ENCODE measurements at regions of chr2 and their contacts with region 1.

Region 1: GRCh38 chr2:36355151-36355889 is at the start of gene CRIM1:
- DNase-seq: peak; percentile 84
- H3K4me3 Mint-ChIP-seq: peak within 1 kb of the TSS; percentile 99
- H3K27ac Mint-ChIP-seq: peak within 1 kb of the TSS; percentile 76
- H3K4me1 Mint-ChIP-seq: peaks cover 43% of the 10 kb centered on the region
- H3K27me3 Mint-ChIP-seq: no peaks in the 10 kb centered on the region
- CTCF ChIP-seq: no peak
- total RNA-seq, gene CRIM1: 48.0 and 57.6 TPM in 2 replicates

Region 2: DNA sequence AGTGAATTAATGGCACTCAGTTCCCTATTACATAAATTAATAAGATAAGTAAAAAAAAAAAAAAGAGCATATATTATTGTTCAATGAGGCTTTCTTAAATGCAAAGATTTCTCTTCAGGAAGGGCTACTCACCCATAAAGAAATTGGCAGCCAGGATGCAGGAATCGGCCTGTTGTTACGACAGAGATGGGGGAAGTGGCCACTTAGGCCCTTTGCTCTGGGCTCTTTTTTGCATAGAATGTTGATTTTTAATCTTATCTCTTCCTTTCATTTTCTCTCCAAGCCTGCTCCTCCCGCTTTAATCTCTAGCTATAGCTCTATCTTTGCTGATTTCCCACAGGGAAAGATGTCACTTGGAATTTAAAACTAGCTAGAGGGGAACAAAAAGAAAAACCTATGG is 391.5 kb before region 1 on chr2:
- CTCF ChIA-PET with region 1: no interaction called
- intact Hi-C with region 1: no loop called
- DNase-seq: no peak
- H3K4me3 Mint-ChIP-seq: no peak overlapping the region
- H3K27ac Mint-ChIP-seq: no peak overlapping the region
- H3K4me1 Mint-ChIP-seq: no peaks in the 10 kb centered on the region
- H3K27me3 Mint-ChIP-seq: no peaks in the 10 kb centered on the region
- CTCF ChIP-seq: no peak

Region 3: DNA sequence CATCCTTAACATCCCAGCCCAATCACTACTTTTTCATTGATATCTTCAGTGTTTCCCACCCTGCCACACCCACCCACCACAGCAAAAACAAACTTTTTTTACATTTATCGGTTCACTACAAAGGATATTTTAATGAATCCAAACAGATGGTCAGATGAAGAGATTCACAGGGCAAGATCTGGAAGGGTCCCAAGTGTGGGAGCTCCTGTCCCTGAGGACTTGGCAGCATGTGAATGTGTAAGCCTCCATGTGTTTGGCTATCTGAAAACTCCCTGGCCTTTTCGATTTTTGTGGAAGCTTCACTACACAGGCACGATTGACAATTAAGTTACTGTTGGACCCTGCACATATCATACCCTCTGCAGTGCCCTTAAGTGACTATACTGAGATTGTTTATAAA is 47.9 kb before region 1 on chr2:
- CTCF ChIA-PET with region 1: no interaction called
- intact Hi-C with region 1: no loop called
- DNase-seq: no peak
- H3K4me3 Mint-ChIP-seq: no peak overlapping the region
- H3K27ac Mint-ChIP-seq: no peak overlapping the region
- H3K4me1 Mint-ChIP-seq: peaks cover 14% of the 10 kb centered on the region
- H3K27me3 Mint-ChIP-seq: no peaks in the 10 kb centered on the region
- CTCF ChIP-seq: no peak

Region 4: DNA sequence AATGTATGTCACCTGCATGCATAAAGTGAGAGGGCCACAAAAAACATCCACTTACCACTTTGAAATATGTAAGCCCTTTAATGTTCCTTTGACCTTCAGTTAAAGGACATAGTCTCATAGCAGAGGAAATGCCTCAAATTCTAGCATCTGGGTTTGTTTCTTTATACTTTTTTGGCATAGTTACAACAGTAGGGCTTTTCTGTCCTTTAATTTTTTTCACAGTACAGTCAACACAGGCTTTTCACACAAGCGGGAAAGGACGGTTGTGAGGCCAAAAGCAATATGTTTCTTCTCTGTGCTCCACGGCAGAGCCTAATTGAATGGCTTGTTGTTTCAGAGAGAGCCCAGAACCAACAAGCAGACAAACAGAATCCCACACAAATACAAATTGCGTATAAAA is 57.9 kb after region 1 on chr2:
- CTCF ChIA-PET with region 1: no interaction called
- intact Hi-C with region 1: loop called (anchors 5 kb)
- DNase-seq: no peak
- H3K4me3 Mint-ChIP-seq: no peak overlapping the region
- H3K27ac Mint-ChIP-seq: no peak overlapping the region
- H3K4me1 Mint-ChIP-seq: peaks cover 35% of the 10 kb centered on the region
- H3K27me3 Mint-ChIP-seq: no peaks in the 10 kb centered on the region
- CTCF ChIP-seq: no peak

Region 5: DNA sequence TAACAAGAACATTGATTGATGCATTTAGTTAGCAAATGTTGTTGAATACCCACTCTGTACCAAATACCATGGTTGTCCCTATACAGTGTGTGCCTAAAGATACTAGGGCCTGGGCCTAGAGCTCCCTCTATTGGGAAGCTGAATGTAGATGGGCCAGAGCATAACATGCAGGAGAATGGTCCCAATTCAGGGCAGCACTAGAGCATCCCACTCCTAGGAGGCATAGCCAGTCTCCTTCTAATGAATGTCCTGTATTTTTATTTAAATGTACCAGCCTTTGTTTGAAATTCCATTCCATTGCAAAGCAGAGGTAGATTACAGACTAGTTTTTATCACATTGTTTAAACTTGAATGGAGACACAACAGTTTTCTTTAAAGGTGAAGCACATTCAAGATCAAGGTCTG is 152.1 kb after region 1 on chr2:
- CTCF ChIA-PET with region 1: interaction called, 5 read pairs
- intact Hi-C with region 1: loop called (anchors 1 kb)
- DNase-seq: peak; percentile 72
- H3K4me3 Mint-ChIP-seq: no peak overlapping the region
- H3K27ac Mint-ChIP-seq: no peak overlapping the region
- H3K4me1 Mint-ChIP-seq: peaks cover 10% of the 10 kb centered on the region
- H3K27me3 Mint-ChIP-seq: no peaks in the 10 kb centered on the region
- CTCF ChIP-seq: peak; percentile 57

Region 6: GRCh38 chr2:36663851-36664695 is 308.8 kb after region 1 on chr2:
- CTCF ChIA-PET with region 1: interaction called, 3 read pairs
- intact Hi-C with region 1: loop called (anchors 1 kb)
- DNase-seq: peak; percentile 45
- H3K4me3 Mint-ChIP-seq: no peak overlapping the region
- H3K27ac Mint-ChIP-seq: no peak overlapping the region
- H3K4me1 Mint-ChIP-seq: no peaks in the 10 kb centered on the region
- H3K27me3 Mint-ChIP-seq: no peaks in the 10 kb centered on the region
- CTCF ChIP-seq: peak; percentile 62